CD4-positive, alpha-beta T cell (primary cell): ENCODE measurements at regions of chr15 and their contacts with region 1.

Region 1: DNA sequence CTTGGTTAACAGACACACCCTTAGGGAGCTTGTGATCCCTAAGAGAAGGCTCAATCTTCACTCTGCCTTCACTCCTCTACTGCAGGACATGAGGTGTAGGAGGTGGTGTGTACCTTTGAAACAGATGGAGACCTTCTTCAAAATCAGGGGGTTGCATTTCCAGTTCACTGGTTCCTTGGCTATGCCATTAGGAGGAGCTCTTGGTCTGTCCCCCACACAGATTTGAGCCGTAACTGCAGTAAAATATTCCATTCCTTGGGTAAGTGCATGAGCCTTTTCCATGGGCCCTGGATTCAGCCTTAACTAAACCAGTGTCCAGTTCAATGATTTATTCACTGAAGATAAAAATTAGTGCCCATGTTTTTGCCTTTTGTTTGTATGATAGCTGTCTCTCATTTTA is 144.6 kb downstream of the MCTP2 start:
- DNase-seq: no peak
- ATAC-seq: no peak
- H3K4me3 ChIP-seq: no peak overlapping the region
- H3K4me3 Mint-ChIP-seq: no peak overlapping the region
- H3K27ac ChIP-seq: no peak overlapping the region
- H3K27ac Mint-ChIP-seq: no peak overlapping the region
- H3K4me1 ChIP-seq: no peaks in the 10 kb centered on the region
- H3K4me1 Mint-ChIP-seq: no peaks in the 10 kb centered on the region
- H3K27me3 ChIP-seq: no peaks in the 10 kb centered on the region
- H3K27me3 Mint-ChIP-seq: no peaks in the 10 kb centered on the region
- CTCF ChIP-seq: no peak

Region 2: GRCh38 chr15:94432279-94432678 is 56.3 kb after region 1 on chr15:
- CTCF ChIA-PET with region 1: no interaction called
- POLR2A ChIA-PET with region 1: no interaction called
- intact Hi-C with region 1: loop called in 1 of 2 experiments (anchors 10 kb)
- DNase-seq: no peak
- ATAC-seq: no peak
- H3K4me3 ChIP-seq: no peak overlapping the region
- H3K4me3 Mint-ChIP-seq: no peak overlapping the region
- H3K27ac ChIP-seq: no peak overlapping the region
- H3K27ac Mint-ChIP-seq: no peak overlapping the region
- H3K4me1 ChIP-seq: no peaks in the 10 kb centered on the region
- H3K4me1 Mint-ChIP-seq: no peaks in the 10 kb centered on the region
- H3K27me3 ChIP-seq: no peaks in the 10 kb centered on the region
- H3K27me3 Mint-ChIP-seq: no peaks in the 10 kb centered on the region
- CTCF ChIP-seq: no peak